Activated CD4-positive, alpha-beta T cell treated with anti-CD3 and anti-CD28 coated beads for 36 hours (primary cell): ENCODE measurements at regions of chr17 and their contacts with region 1.

Region 1: GRCh38 chr17:75109407-75110233 is at the start of gene ARMC7:
- DNase-seq: peak; percentile 95
- ATAC-seq: peak; percentile 82
- H3K4me3 Mint-ChIP-seq: peak within 1 kb of the TSS; percentile 79
- H3K27ac Mint-ChIP-seq: peak within 1 kb of the TSS; percentile 92
- H3K4me1 Mint-ChIP-seq: peaks cover 28% of the 10 kb centered on the region
- H3K27me3 Mint-ChIP-seq: no peaks in the 10 kb centered on the region
- total RNA-seq, gene ARMC7: 6.7 to 7.7 TPM

Region 2: DNA sequence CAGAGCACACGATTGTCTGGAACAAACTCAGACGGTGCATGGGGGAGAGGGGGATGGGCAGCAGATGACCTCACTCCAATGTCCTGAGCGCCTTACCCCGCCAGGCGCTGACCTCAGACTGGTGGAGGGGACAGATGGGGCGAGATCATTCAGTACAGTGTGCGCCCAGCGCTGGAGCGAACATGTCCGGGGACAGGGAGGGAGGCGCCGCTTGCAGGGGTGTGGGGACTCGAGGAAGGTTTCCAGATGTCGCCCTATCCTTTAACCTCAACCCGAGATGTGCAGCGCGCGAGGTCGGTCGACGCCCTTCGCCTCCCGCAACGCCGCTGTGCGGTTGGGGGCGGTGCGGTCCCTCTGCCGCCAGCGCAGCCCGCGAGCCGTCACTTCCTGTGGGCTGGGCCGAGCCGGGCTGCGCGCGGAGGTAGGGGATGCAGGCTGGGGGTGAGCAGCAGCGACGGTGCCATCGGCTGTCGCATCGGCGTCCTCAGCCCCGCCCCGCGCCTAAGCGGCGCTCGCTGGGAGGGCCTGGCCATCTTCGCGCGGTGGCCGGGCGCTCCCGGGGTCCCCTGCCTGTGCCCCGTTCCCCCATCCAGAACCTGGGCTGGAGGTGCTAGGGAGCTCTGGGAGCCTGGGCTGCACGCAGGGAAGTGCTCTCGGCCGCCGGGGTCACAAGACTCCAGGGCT is 127.5 kb before region 1 on chr17:
- CTCF ChIA-PET with region 1: interaction called, 4 read pairs
- POLR2A ChIA-PET with region 1: no interaction called
- intact Hi-C with region 1: loop called in 1 of 2 experiments (anchors 1 kb)
- DNase-seq: peak; percentile 90
- ATAC-seq: peak; percentile 95
- H3K4me3 Mint-ChIP-seq: peak overlapping the region; percentile 77
- H3K27ac Mint-ChIP-seq: peak overlapping the region; percentile 79
- H3K4me1 Mint-ChIP-seq: peaks cover 18% of the 10 kb centered on the region
- H3K27me3 Mint-ChIP-seq: peaks cover 5% of the 10 kb centered on the region

Region 3: DNA sequence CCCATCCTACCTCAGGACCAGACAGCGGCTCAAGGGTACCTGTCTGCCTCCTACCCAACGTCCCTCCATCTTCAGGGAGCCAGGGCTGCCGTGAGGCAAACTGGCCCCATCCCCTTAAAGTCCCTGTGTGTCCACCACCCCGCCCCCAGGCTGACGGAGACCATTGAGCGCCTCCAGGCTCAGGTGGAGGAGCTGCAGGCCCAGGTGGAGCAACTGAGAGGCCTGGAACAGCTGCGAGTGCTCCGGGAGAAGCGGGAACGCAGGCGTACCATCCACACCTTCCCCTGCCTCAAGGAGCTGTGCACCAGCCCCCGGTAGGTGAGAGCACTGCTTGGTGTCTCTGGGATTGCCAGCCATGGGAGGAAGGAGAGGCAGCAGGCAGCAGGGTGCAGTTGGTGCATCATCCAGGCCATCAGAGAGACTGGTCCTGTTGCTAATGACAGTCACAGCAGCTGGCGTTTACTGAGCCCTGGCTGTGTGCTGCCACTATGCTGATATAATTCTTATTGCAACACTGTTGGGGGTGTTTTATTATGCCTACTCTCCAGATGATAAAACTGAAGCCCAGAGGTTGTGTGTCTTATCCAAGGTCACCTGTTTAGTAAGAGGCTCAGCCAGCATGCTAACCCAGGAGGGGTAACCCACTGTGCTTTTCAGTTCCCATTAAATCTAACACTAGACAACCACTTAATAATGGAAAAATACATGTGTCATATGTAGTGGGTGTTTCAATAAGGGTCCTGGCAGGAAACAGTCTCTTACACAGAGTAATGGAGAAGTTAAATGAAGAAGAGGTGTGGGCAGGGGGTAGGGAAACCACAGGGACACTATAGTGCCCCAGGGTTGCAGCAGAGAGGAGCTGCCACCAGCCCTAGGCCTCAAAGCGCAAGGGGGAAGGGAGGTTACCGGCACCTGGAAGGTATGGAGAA is 107.4 kb before region 1 on chr17:
- CTCF ChIA-PET with region 1: no interaction called
- POLR2A ChIA-PET with region 1: no interaction called
- intact Hi-C with region 1: no loop called
- DNase-seq: no peak
- ATAC-seq: no peak
- H3K4me3 Mint-ChIP-seq: no peak overlapping the region
- H3K27ac Mint-ChIP-seq: no peak overlapping the region
- H3K4me1 Mint-ChIP-seq: peaks cover 6% of the 10 kb centered on the region
- H3K27me3 Mint-ChIP-seq: no peaks in the 10 kb centered on the region

Region 4: DNA sequence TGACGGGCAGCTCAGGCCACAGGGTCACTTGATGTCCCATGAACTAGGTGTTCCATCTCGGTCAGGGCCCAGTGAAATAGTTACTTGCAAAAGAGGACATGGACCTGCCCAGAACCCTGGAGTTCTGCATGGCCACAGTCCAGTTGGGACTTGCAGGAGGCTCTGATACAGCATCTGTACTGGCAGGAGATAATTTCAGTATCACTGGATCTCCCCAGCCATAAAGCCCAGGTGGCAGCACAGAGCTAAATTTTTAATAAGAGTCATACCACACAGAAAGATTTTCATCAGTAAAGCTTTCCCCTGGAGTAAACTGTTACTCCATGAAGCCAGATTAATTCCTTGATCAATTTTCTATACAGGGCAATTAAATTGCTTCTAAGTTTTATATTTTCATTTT is 39.8 kb before region 1 on chr17:
- CTCF ChIA-PET with region 1: interaction called, 11 read pairs
- POLR2A ChIA-PET with region 1: interaction called, 6 read pairs
- intact Hi-C with region 1: loop called in 1 of 2 experiments (anchors 5 kb)
- DNase-seq: peak; percentile 31
- ATAC-seq: no peak
- H3K4me3 Mint-ChIP-seq: no peak overlapping the region
- H3K27ac Mint-ChIP-seq: no peak overlapping the region
- H3K4me1 Mint-ChIP-seq: peaks cover 34% of the 10 kb centered on the region
- H3K27me3 Mint-ChIP-seq: no peaks in the 10 kb centered on the region

Region 5: DNA sequence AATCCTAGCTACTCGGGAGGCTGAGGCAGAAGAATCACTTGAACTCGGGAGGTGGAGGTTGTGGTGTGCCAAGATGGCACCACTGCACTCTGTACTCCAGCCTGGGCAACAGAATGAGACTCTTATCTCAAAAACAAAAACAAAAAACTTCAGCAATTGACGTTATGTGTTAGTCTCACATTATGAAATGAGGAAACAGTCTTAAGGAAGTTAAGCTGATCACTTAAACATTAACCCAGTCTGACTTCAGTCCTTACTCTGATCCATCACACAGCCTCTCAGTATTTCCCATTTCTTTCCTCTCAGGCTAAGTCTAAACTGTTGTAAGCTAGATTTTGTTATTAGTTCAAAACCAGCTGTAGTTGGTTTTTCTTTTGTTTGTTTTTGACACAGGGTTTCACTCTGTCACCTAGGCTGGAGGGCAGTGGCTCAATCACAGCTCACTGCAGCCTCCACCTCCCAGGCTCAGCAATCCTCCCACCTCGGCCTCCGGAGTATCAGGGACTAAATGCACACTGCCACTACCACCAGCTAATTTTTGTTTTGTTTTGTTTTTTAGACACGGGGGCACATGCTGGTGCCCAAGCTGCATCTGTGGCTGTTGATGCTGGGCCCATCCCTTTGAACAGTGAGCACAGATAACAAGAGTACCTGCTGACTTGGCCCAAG is 38.4 kb after region 1 on chr17:
- CTCF ChIA-PET with region 1: interaction called, 10 read pairs
- POLR2A ChIA-PET with region 1: interaction called, 6 read pairs
- intact Hi-C with region 1: loop called in 1 of 2 experiments (anchors 5 kb)
- DNase-seq: no peak
- ATAC-seq: no peak
- H3K4me3 Mint-ChIP-seq: no peak overlapping the region
- H3K27ac Mint-ChIP-seq: peak overlapping the region; percentile 51
- H3K4me1 Mint-ChIP-seq: peaks cover 24% of the 10 kb centered on the region
- H3K27me3 Mint-ChIP-seq: no peaks in the 10 kb centered on the region

Region 6: GRCh38 chr17:75191584-75191983 is 82.0 kb after region 1 on chr17:
- CTCF ChIA-PET with region 1: interaction called, 16 read pairs
- POLR2A ChIA-PET with region 1: interaction called, 3 read pairs
- intact Hi-C with region 1: no loop called
- DNase-seq: no peak
- ATAC-seq: no peak
- H3K4me3 Mint-ChIP-seq: no peak overlapping the region
- H3K27ac Mint-ChIP-seq: no peak overlapping the region
- H3K4me1 Mint-ChIP-seq: peaks cover 12% of the 10 kb centered on the region
- H3K27me3 Mint-ChIP-seq: no peaks in the 10 kb centered on the region

Region 7: GRCh38 chr17:75271233-75271954 is 161.8 kb after region 1 on chr17:
- CTCF ChIA-PET with region 1: interaction called, 11 read pairs
- POLR2A ChIA-PET with region 1: no interaction called
- intact Hi-C with region 1: no loop called
- DNase-seq: peak; percentile 93
- ATAC-seq: peak; percentile 79
- H3K4me3 Mint-ChIP-seq: peak overlapping the region; percentile 80
- H3K27ac Mint-ChIP-seq: peak overlapping the region; percentile 81
- H3K4me1 Mint-ChIP-seq: peaks cover 21% of the 10 kb centered on the region
- H3K27me3 Mint-ChIP-seq: no peaks in the 10 kb centered on the region